IMR-90 (cell line): ENCODE measurements at regions of chr4 and their contacts with region 1.

Region 1: DNA sequence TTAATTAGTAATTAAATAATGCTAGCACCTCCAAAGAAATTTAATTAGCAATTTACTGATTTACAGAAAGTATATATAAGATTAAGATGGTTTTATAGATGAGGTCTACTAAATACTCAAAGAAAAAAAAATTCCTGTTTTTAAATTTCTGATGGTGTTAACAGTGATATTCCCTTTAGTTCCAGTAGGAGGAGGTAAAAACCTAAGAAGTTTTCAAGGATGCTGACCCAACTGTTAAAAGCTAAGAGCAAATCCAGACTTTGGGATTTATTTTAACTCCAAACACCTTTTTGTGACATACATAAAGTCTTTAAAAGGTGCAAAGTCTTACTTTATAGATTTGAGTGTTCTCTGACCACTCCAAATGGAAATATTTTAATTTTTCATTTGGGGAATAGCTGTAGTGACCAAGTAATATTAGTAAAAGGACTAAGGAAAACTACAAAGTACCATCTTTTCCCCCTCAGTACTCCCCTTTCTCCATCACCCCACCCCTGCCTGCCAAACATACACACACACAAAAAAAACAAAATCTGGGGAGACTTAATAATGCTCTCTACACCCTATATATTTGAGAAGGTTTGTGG is 34.2 kb upstream of the CSN1S1 start:
- DNase-seq: peak; percentile 3
- ATAC-seq: peak; percentile 49; the same call in 1 of the 2 replicates
- H3K4me3 ChIP-seq: no peak overlapping the region
- H3K27ac ChIP-seq: no peak overlapping the region
- H3K4me1 ChIP-seq: no peaks in the 10 kb centered on the region
- H3K27me3 ChIP-seq: no peaks in the 10 kb centered on the region
- CTCF ChIP-seq: peak; percentile 38
- POLR2A ChIP-seq: no peak
- RAD21 ChIP-seq: peak; percentile 29; the same call in 1 of the 2 replicates

Region 2: GRCh38 chr4:70505151-70505748 is 608.6 kb after region 1 on chr4:
- CTCF ChIA-PET with region 1: interaction called, 3 read pairs
- POLR2A ChIA-PET with region 1: no interaction called
- dilution Hi-C with region 1: no loop called
- in situ Hi-C with region 1: no loop called
- intact Hi-C with region 1: loop called (anchors 2 kb)
- DNase-seq: peak; percentile 39
- ATAC-seq: peak; percentile 95
- H3K4me3 ChIP-seq: no peak overlapping the region
- H3K27ac ChIP-seq: no peak overlapping the region
- H3K4me1 ChIP-seq: no peaks in the 10 kb centered on the region
- H3K27me3 ChIP-seq: no peaks in the 10 kb centered on the region
- CTCF ChIP-seq: peak; percentile 82
- POLR2A ChIP-seq: 0 out of 2 replicates have a peak, but pooled peaks have one; percentile 21
- RAD21 ChIP-seq: peak; percentile 83

Region 3: GRCh38 chr4:70559211-70559830 is 662.7 kb after region 1 on chr4:
- CTCF ChIA-PET with region 1: no interaction called
- POLR2A ChIA-PET with region 1: no interaction called
- dilution Hi-C with region 1: no loop called
- in situ Hi-C with region 1: no loop called
- intact Hi-C with region 1: loop called (anchors 5 kb)
- DNase-seq: peak; percentile 34
- ATAC-seq: peak; percentile 89
- H3K4me3 ChIP-seq: no peak overlapping the region
- H3K27ac ChIP-seq: no peak overlapping the region
- H3K4me1 ChIP-seq: no peaks in the 10 kb centered on the region
- H3K27me3 ChIP-seq: no peaks in the 10 kb centered on the region
- CTCF ChIP-seq: peak; percentile 70
- POLR2A ChIP-seq: no peak
- RAD21 ChIP-seq: peak; percentile 60

Region 4: GRCh38 chr4:70863099-70863790 is 966.6 kb after region 1 on chr4:
- CTCF ChIA-PET with region 1: no interaction called
- POLR2A ChIA-PET with region 1: no interaction called
- dilution Hi-C with region 1: no loop called
- in situ Hi-C with region 1: no loop called
- intact Hi-C with region 1: no loop called
- DNase-seq: no peak
- ATAC-seq: 0 out of 2 replicates have a peak, but pooled peaks have one; percentile 24
- H3K4me3 ChIP-seq: no peak overlapping the region
- H3K27ac ChIP-seq: no peak overlapping the region; the same call in 1 of the 2 replicates
- H3K4me1 ChIP-seq: 0 out of 2 replicates have a peak, but pooled peaks cover 5% of the 10 kb centered on the region
- H3K27me3 ChIP-seq: no peaks in the 10 kb centered on the region
- CTCF ChIP-seq: no peak
- POLR2A ChIP-seq: no peak
- RAD21 ChIP-seq: no peak